GM12878 (cell line): ENCODE measurements at regions of chr3 and their contacts with region 1.

Region 1: DNA sequence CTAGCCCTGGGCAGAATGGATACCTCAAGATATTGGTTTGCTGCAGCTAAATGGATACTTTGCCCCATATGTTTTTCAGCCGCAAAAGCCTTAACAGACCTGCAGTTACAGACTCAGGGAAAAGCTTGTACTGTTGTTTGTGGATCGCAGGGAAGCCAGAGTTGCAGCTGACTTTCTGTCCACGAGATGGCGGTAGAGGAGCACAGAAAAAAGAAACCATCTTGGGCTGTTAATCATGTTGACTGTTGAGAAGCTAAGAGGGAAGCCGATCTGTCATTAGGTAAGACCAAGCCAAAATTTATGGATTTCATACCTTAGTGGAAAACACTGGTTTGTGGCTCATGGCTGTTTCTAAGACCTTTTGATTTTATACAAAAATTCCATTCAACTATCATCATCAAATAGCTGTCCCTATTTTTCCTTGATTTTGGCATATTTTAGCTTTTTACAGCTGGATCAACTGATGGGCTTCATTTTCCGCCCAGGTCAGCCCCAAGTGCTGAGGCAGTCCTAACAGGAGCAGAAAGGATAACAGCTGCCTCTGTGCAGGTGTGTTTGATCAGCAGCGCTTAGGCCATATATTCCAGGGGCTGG is 205.7 kb upstream of the ZPLD1 start:
- DNase-seq: peak; percentile 61
- ATAC-seq: peak; percentile 78
- H3K4me3 ChIP-seq: no peak overlapping the region
- H3K27ac ChIP-seq: no peak overlapping the region
- H3K4me1 ChIP-seq: peaks cover 6% of the 10 kb centered on the region; the same call in 1 of the 2 replicates
- H3K27me3 ChIP-seq: no peaks in the 10 kb centered on the region
- CTCF ChIP-seq: peak; percentile 89 to 93 (median 91)
- EP300 ChIP-seq: no peak
- POLR2A ChIP-seq: no peak
- RAD21 ChIP-seq: peak; percentile 98

Region 2: DNA sequence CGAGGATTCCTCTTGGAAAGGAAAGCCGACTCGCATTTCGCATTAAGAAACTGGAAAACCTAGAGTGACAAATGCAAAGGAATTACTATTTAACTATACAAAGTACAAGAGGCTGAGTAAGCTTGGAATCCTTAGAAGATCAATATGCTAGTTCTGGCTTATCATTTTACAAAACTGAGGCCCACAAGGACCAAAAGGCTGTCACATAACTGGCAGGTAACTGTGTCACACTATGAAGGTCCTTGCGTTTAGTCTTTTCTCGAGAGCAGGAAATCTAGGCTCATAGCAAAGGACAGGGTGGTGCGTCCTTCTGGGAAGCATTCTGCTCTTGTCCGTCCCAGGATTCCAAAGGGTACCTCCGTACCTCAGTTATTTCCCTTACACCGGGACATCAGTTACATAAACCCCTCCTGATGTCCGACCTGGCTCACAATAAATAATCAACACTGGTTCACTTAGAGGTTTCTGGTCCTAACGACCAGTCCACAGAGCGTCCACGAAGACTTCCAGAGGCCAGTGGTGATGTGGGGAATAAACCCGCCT is 543.2 kb before region 1 on chr3:
- CTCF ChIA-PET with region 1: interaction called, 7 read pairs
- POLR2A ChIA-PET with region 1: no interaction called
- RAD21 ChIA-PET with region 1: interaction called, 8 read pairs
- SMC1A ChIA-PET with region 1: interaction called, 4 read pairs
- in situ Hi-C with region 1: loop called (anchors 5 kb)
- intact Hi-C with region 1: no loop called
- DNase-seq: no peak
- ATAC-seq: peak; percentile 22
- H3K4me3 ChIP-seq: peak overlapping the region; percentile 76
- H3K27ac ChIP-seq: peak overlapping the region; percentile 76
- H3K4me1 ChIP-seq: peaks cover 10% of the 10 kb centered on the region
- H3K27me3 ChIP-seq: no peaks in the 10 kb centered on the region
- CTCF ChIP-seq: no peak
- EP300 ChIP-seq: no peak
- POLR2A ChIP-seq: no peak
- RAD21 ChIP-seq: no peak

Region 3: GRCh38 chr3:101819758-101820157 is 409.4 kb before region 1 on chr3:
- CTCF ChIA-PET with region 1: interaction called, 1,057 read pairs
- POLR2A ChIA-PET with region 1: interaction called, 15 read pairs
- RAD21 ChIA-PET with region 1: interaction called, 659 read pairs
- SMC1A ChIA-PET with region 1: interaction called, 949 read pairs
- in situ Hi-C with region 1: loop called (anchors 5 kb)
- intact Hi-C with region 1: no loop called
- DNase-seq: no peak
- ATAC-seq: peak; percentile 93
- H3K4me3 ChIP-seq: no peak overlapping the region
- H3K27ac ChIP-seq: no peak overlapping the region
- H3K4me1 ChIP-seq: peaks cover 24% of the 10 kb centered on the region
- H3K27me3 ChIP-seq: no peaks in the 10 kb centered on the region
- CTCF ChIP-seq: no peak
- EP300 ChIP-seq: peak in 1 of 2 experiments; percentile 47; a peak in 1 of 4 replicates
- POLR2A ChIP-seq: no peak
- RAD21 ChIP-seq: no peak

Region 4: GRCh38 chr3:101902041-101902440 is 327.1 kb before region 1 on chr3:
- CTCF ChIA-PET with region 1: interaction called, 6 read pairs
- POLR2A ChIA-PET with region 1: no interaction called
- RAD21 ChIA-PET with region 1: interaction called, 18 read pairs
- SMC1A ChIA-PET with region 1: interaction called, 17 read pairs
- in situ Hi-C with region 1: no loop called
- intact Hi-C with region 1: no loop called
- DNase-seq: no peak
- ATAC-seq: peak; percentile 42
- H3K4me3 ChIP-seq: no peak overlapping the region
- H3K27ac ChIP-seq: no peak overlapping the region
- H3K4me1 ChIP-seq: peaks cover 26% of the 10 kb centered on the region
- H3K27me3 ChIP-seq: no peaks in the 10 kb centered on the region
- CTCF ChIP-seq: no peak
- EP300 ChIP-seq: no peak
- POLR2A ChIP-seq: no peak
- RAD21 ChIP-seq: no peak

Region 5: GRCh38 chr3:102024270-102024904 is 204.8 kb before region 1 on chr3:
- CTCF ChIA-PET with region 1: interaction called, 4 read pairs
- POLR2A ChIA-PET with region 1: no interaction called
- RAD21 ChIA-PET with region 1: interaction called, 4 read pairs
- SMC1A ChIA-PET with region 1: interaction called, 15 read pairs
- in situ Hi-C with region 1: no loop called
- intact Hi-C with region 1: no loop called
- DNase-seq: no peak
- ATAC-seq: peak; percentile 59
- H3K4me3 ChIP-seq: no peak overlapping the region
- H3K27ac ChIP-seq: no peak overlapping the region
- H3K4me1 ChIP-seq: no peaks in the 10 kb centered on the region
- H3K27me3 ChIP-seq: no peaks in the 10 kb centered on the region
- CTCF ChIP-seq: no peak
- EP300 ChIP-seq: no peak
- POLR2A ChIP-seq: no peak
- RAD21 ChIP-seq: no peak

Region 6: DNA sequence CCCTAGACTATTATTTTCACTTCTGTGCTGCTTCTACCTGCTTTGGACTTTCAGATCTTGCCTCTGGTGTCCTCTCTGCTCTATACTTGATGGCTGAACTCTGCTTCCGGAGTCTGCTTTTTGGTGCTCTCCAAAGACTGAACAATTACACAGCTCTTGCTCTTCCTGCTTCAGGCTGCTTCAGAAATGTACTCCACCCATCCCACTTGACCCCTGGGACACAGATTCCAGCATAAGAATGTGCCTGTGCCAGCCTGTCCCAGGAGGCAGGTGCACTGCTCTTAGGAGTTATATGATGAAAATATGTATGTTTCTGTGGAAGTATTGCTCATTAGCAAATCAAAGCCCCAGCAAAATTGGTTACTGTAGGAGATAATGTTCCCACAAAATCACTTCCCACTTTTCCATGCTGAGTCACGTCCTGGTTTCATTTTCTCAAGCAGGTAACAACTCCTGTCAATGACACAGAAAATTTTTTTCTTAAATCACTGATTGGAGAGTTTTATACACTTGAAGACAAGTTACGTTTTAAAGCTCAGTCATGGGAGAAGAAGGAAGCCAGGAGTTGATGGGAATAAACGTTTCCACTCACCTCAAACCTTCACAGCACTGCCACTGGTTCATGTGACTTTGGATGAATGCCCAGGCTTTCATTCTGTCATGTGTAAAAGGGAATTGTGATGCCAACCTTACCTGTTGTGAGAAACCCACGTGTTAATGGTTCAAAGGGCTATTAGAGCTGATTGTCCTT is 33.8 kb before region 1 on chr3:
- CTCF ChIA-PET with region 1: interaction called, 3 read pairs
- POLR2A ChIA-PET with region 1: interaction called, 3 read pairs
- RAD21 ChIA-PET with region 1: interaction called, 12 read pairs
- SMC1A ChIA-PET with region 1: interaction called, 6 read pairs
- in situ Hi-C with region 1: no loop called
- intact Hi-C with region 1: no loop called
- DNase-seq: no peak
- ATAC-seq: no peak
- H3K4me3 ChIP-seq: no peak overlapping the region
- H3K27ac ChIP-seq: no peak overlapping the region
- H3K4me1 ChIP-seq: no peaks in the 10 kb centered on the region
- H3K27me3 ChIP-seq: no peaks in the 10 kb centered on the region
- CTCF ChIP-seq: no peak
- EP300 ChIP-seq: no peak
- POLR2A ChIP-seq: no peak
- RAD21 ChIP-seq: no peak

Region 7: GRCh38 chr3:102577091-102577789 is 348.1 kb after region 1 on chr3:
- CTCF ChIA-PET with region 1: no interaction called
- POLR2A ChIA-PET with region 1: no interaction called
- RAD21 ChIA-PET with region 1: no interaction called
- SMC1A ChIA-PET with region 1: no interaction called
- in situ Hi-C with region 1: no loop called
- intact Hi-C with region 1: no loop called
- DNase-seq: no peak
- ATAC-seq: no peak
- H3K4me3 ChIP-seq: no peak overlapping the region
- H3K27ac ChIP-seq: no peak overlapping the region
- H3K4me1 ChIP-seq: no peaks in the 10 kb centered on the region
- H3K27me3 ChIP-seq: no peaks in the 10 kb centered on the region
- CTCF ChIP-seq: no peak
- EP300 ChIP-seq: no peak
- POLR2A ChIP-seq: no peak
- RAD21 ChIP-seq: no peak

Region 8: GRCh38 chr3:102673271-102674115 is 444.3 kb after region 1 on chr3:
- CTCF ChIA-PET with region 1: interaction called, 84 read pairs
- POLR2A ChIA-PET with region 1: no interaction called
- RAD21 ChIA-PET with region 1: interaction called, 33 read pairs
- SMC1A ChIA-PET with region 1: interaction called, 41 read pairs
- in situ Hi-C with region 1: no loop called
- intact Hi-C with region 1: loop called (anchors 2 kb)
- DNase-seq: peak; percentile 5
- ATAC-seq: peak; percentile 86
- H3K4me3 ChIP-seq: no peak overlapping the region
- H3K27ac ChIP-seq: no peak overlapping the region
- H3K4me1 ChIP-seq: no peaks in the 10 kb centered on the region
- H3K27me3 ChIP-seq: no peaks in the 10 kb centered on the region; a peak in 1 of 4 replicates
- CTCF ChIP-seq: peak; percentile 75 to 90 (median 83); a peak in 5 of 6 replicates
- EP300 ChIP-seq: no peak
- POLR2A ChIP-seq: no peak
- RAD21 ChIP-seq: peak; percentile 96